AG04450 (cell line): ENCODE measurements at regions of chr9 and their contacts with region 1.

Region 1: GRCh38 chr9:125241000-125241862 is at the start of gene HSPA5:
- DNase-seq: peak; percentile 99
- H3K4me3 ChIP-seq: peak within 1 kb of the TSS; percentile 100
- H3K27ac ChIP-seq: peak within 1 kb of the TSS; percentile 99
- H3K27me3 ChIP-seq: no peaks in the 10 kb centered on the region
- CTCF ChIP-seq: no peak
- polyA plus RNA-seq, gene HSPA5: 477 and 591 TPM in 2 replicates

Region 2: GRCh38 chr9:125189361-125190289 is 51.6 kb before region 1 on chr9 and contains the start of gene PPP6C:
- CTCF ChIA-PET with region 1: no interaction called
- POLR2A ChIA-PET with region 1: interaction called, 16 read pairs
- DNase-seq: peak; percentile 93
- H3K4me3 ChIP-seq: peak within 1 kb of the TSS; percentile 99
- H3K27ac ChIP-seq: peak within 1 kb of the TSS; percentile 90
- H3K27me3 ChIP-seq: no peaks in the 10 kb centered on the region
- CTCF ChIP-seq: peak; percentile 68
- polyA plus RNA-seq, gene PPP6C: 24.3 and 34.8 TPM in 2 replicates

Region 3: GRCh38 chr9:125255781-125256391 is 14.7 kb after region 1 on chr9:
- CTCF ChIA-PET with region 1: interaction called, 4 read pairs
- POLR2A ChIA-PET with region 1: interaction called, 37 read pairs
- DNase-seq: no peak
- H3K4me3 ChIP-seq: no peak overlapping the region
- H3K27ac ChIP-seq: no peak overlapping the region
- H3K27me3 ChIP-seq: no peaks in the 10 kb centered on the region
- CTCF ChIP-seq: peak; percentile 42

Region 4: GRCh38 chr9:125272697-125273096 is 31.5 kb after region 1 on chr9:
- CTCF ChIA-PET with region 1: no interaction called
- POLR2A ChIA-PET with region 1: interaction called, 15 read pairs
- DNase-seq: peak; percentile 32
- H3K4me3 ChIP-seq: no peak overlapping the region
- H3K27ac ChIP-seq: peak overlapping the region; percentile 4
- H3K27me3 ChIP-seq: no peaks in the 10 kb centered on the region
- CTCF ChIP-seq: no peak

Region 5: GRCh38 chr9:125297917-125298316 is 56.7 kb after region 1 on chr9:
- CTCF ChIA-PET with region 1: no interaction called
- POLR2A ChIA-PET with region 1: interaction called, 15 read pairs
- DNase-seq: no peak
- H3K4me3 ChIP-seq: no peak overlapping the region
- H3K27ac ChIP-seq: no peak overlapping the region
- H3K27me3 ChIP-seq: no peaks in the 10 kb centered on the region
- CTCF ChIP-seq: no peak

Region 6: GRCh38 chr9:125343518-125344275 is 102.5 kb after region 1 on chr9:
- CTCF ChIA-PET with region 1: no interaction called
- POLR2A ChIA-PET with region 1: interaction called, 15 read pairs
- DNase-seq: peak; percentile 10
- H3K4me3 ChIP-seq: no peak overlapping the region
- H3K27ac ChIP-seq: no peak overlapping the region
- H3K27me3 ChIP-seq: no peaks in the 10 kb centered on the region
- CTCF ChIP-seq: no peak